CD4-positive, alpha-beta memory T cell (primary cell): ENCODE measurements at regions of chr14 and their contacts with region 1.

Region 1: GRCh38 chr14:65958664-65959562 is 527.3 kb upstream of the CCDC196 start:
- DNase-seq: peak in 4 of 5 donors; percentile 30 to 47 (median 45)
- H3K4me3 ChIP-seq: no peak overlapping the region
- H3K4me3 Mint-ChIP-seq: no peak overlapping the region
- H3K27ac ChIP-seq: no peak overlapping the region
- H3K27ac Mint-ChIP-seq: no peak overlapping the region
- H3K4me1 ChIP-seq: peaks cover 23% of the 10 kb centered on the region
- H3K4me1 Mint-ChIP-seq: peaks cover 18 to 32% (median 24%) of the 10 kb centered on the region in 4 donors
- H3K27me3 ChIP-seq: no peaks in the 10 kb centered on the region
- H3K27me3 Mint-ChIP-seq: no peaks in the 10 kb centered on the region

Region 2: DNA sequence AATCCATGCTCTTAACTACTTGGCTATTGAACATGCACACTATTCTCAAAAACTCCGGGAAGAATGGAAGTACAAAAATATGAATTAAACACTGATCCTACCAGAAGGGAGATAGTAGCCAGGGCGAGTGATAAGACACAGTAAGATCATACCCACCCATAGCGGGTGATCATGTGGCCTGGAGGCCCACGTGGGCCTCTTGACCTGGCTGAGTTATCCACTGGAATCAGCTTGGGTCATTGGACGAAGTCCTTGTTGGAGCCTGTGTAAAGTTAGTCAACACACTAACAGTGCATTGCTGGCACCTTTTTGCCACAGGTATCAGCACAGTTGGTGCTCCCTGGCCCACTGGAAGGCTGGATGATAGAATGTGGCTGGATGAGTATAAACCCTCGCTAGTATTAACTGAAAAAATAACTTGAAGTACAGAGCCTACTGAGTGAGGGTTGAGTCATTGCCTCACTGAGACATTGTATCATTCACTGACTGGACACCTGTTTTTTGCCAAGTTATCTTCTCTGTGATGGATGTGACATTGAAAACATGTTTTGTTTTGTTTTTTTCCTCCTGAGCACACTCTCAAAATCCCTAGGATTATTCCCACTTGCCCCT is 695.6 kb before region 1 on chr14:
- CTCF ChIA-PET with region 1: no interaction called
- POLR2A ChIA-PET with region 1: no interaction called
- intact Hi-C with region 1: no loop called
- DNase-seq: no peak
- H3K4me3 ChIP-seq: no peak overlapping the region
- H3K4me3 Mint-ChIP-seq: no peak overlapping the region
- H3K27ac ChIP-seq: no peak overlapping the region
- H3K27ac Mint-ChIP-seq: no peak overlapping the region
- H3K4me1 ChIP-seq: no peaks in the 10 kb centered on the region
- H3K4me1 Mint-ChIP-seq: peaks cover 0 to 1% (median under 1%) of the 10 kb centered on the region in 4 donors
- H3K27me3 ChIP-seq: no peaks in the 10 kb centered on the region
- H3K27me3 Mint-ChIP-seq: no peaks in the 10 kb centered on the region

Region 3: DNA sequence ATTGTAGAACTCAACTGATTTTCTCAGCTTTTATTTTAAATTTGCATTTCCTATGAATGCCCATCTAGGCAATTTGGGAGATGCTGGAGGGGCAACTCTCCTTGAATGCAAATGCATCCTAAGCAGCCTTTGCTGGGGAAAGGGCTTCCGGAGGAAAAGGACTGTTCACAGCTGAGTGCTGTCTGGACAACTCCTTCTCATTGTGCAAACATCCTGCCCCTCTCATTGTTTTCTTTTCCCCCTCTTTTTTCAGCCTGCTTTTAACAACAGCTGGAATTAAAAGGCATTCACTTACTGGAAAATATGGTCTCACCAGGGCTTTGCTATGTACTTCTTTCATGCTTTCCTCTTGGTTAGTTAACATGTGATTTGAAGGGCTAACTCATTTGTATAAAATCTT is 148.6 kb before region 1 on chr14:
- CTCF ChIA-PET with region 1: interaction called, 36 read pairs
- POLR2A ChIA-PET with region 1: interaction called, 3 read pairs
- intact Hi-C with region 1: loop called (anchors 1 kb)
- DNase-seq: no peak
- H3K4me3 ChIP-seq: no peak overlapping the region
- H3K4me3 Mint-ChIP-seq: no peak overlapping the region
- H3K27ac ChIP-seq: no peak overlapping the region
- H3K27ac Mint-ChIP-seq: no peak overlapping the region
- H3K4me1 ChIP-seq: no peaks in the 10 kb centered on the region
- H3K4me1 Mint-ChIP-seq: peaks cover 0 to 5% (median 0%) of the 10 kb centered on the region in 4 donors
- H3K27me3 ChIP-seq: no peaks in the 10 kb centered on the region
- H3K27me3 Mint-ChIP-seq: no peaks in the 10 kb centered on the region

Region 4: GRCh38 chr14:65840118-65840751 is 118.7 kb before region 1 on chr14:
- CTCF ChIA-PET with region 1: interaction called, 46 read pairs
- POLR2A ChIA-PET with region 1: no interaction called
- intact Hi-C with region 1: no loop called
- DNase-seq: no peak
- H3K4me3 ChIP-seq: no peak overlapping the region
- H3K4me3 Mint-ChIP-seq: peak overlapping the region in 3 of 8 donors; percentile 25 to 43 (median 29)
- H3K27ac ChIP-seq: no peak overlapping the region
- H3K27ac Mint-ChIP-seq: peak overlapping the region in 1 of 7 donors; percentile 46
- H3K4me1 ChIP-seq: peaks cover 63% of the 10 kb centered on the region
- H3K4me1 Mint-ChIP-seq: peaks cover 55 to 85% (median 70%) of the 10 kb centered on the region in 4 donors
- H3K27me3 ChIP-seq: no peaks in the 10 kb centered on the region
- H3K27me3 Mint-ChIP-seq: no peaks in the 10 kb centered on the region

Region 5: GRCh38 chr14:65860956-65861611 is 97.8 kb before region 1 on chr14:
- CTCF ChIA-PET with region 1: interaction called, 20 read pairs
- POLR2A ChIA-PET with region 1: no interaction called
- intact Hi-C with region 1: no loop called
- DNase-seq: peak in 4 of 5 donors; percentile 31 to 51 (median 38)
- H3K4me3 ChIP-seq: no peak overlapping the region
- H3K4me3 Mint-ChIP-seq: peak overlapping the region in 6 of 8 donors; percentile 0 to 74 (median 58)
- H3K27ac ChIP-seq: no peak overlapping the region
- H3K27ac Mint-ChIP-seq: peak overlapping the region; percentile 0 to 62 (median 14)
- H3K4me1 ChIP-seq: peaks cover 47% of the 10 kb centered on the region
- H3K4me1 Mint-ChIP-seq: peaks cover 45 to 65% (median 52%) of the 10 kb centered on the region in 4 donors
- H3K27me3 ChIP-seq: no peaks in the 10 kb centered on the region
- H3K27me3 Mint-ChIP-seq: no peaks in the 10 kb centered on the region

Region 6: DNA sequence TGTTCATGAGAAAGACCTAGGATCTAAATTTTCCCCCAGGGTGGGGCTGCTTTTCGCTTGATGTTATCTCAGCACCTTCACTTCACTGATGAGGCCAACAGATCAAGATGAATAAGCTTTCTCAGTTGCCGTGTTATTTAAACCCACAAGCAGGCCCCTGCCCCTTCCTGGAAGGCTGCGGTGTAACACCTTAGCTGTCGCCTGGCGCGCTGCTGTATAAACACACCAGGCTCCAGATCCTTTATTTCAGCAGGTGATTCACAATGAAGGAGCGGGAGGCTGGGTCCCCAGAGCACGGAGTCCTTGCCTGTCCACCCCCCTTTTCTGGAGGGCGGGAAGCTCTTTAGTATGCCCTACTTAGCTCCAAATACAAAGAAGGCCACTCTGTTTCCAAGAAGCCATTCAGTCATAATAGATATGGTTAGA is 31.0 kb before region 1 on chr14:
- CTCF ChIA-PET with region 1: interaction called, 64 read pairs
- POLR2A ChIA-PET with region 1: interaction called, 18 read pairs
- intact Hi-C with region 1: loop called (anchors 2 kb)
- DNase-seq: peak; percentile 66 to 78 (median 73)
- H3K4me3 ChIP-seq: peak overlapping the region in 1 of 2 donors; percentile 22
- H3K4me3 Mint-ChIP-seq: peak overlapping the region; percentile 45 to 81 (median 73)
- H3K27ac ChIP-seq: peak overlapping the region; percentile 42
- H3K27ac Mint-ChIP-seq: peak overlapping the region; percentile 81 to 96 (median 92)
- H3K4me1 ChIP-seq: peaks cover 55% of the 10 kb centered on the region
- H3K4me1 Mint-ChIP-seq: peaks cover 52 to 72% (median 64%) of the 10 kb centered on the region in 4 donors
- H3K27me3 ChIP-seq: no peaks in the 10 kb centered on the region
- H3K27me3 Mint-ChIP-seq: no peaks in the 10 kb centered on the region

Region 7: GRCh38 chr14:67763158-67763788 is 1804.4 kb after region 1 on chr14:
- CTCF ChIA-PET with region 1: no interaction called
- POLR2A ChIA-PET with region 1: no interaction called
- intact Hi-C with region 1: no loop called
- DNase-seq: no peak
- H3K4me3 ChIP-seq: no peak overlapping the region
- H3K4me3 Mint-ChIP-seq: no peak overlapping the region
- H3K27ac ChIP-seq: no peak overlapping the region
- H3K27ac Mint-ChIP-seq: no peak overlapping the region
- H3K4me1 ChIP-seq: no peaks in the 10 kb centered on the region
- H3K4me1 Mint-ChIP-seq: no peaks in the 10 kb centered on the region
- H3K27me3 ChIP-seq: no peaks in the 10 kb centered on the region
- H3K27me3 Mint-ChIP-seq: no peaks in the 10 kb centered on the region